Activated CD8-positive, alpha-beta T cell treated with anti-CD3 and anti-CD28 coated beads for 36 hours (primary cell): ENCODE measurements at regions of chr14 and their contacts with region 1.

Region 1: GRCh38 chr14:106605548-106606448 is 1079.4 kb downstream of the TMEM121 start:
- DNase-seq: peak; percentile 94
- ATAC-seq: peak; percentile 100
- H3K4me3 Mint-ChIP-seq: no peak overlapping the region
- H3K27ac Mint-ChIP-seq: no peak overlapping the region
- H3K4me1 Mint-ChIP-seq: no peaks in the 10 kb centered on the region
- H3K27me3 Mint-ChIP-seq: peaks cover 20% of the 10 kb centered on the region
- CTCF ChIP-seq: peak; percentile 75

Region 2: GRCh38 chr14:106051796-106052195 is 554.0 kb before region 1 on chr14:
- CTCF ChIA-PET with region 1: no interaction called
- POLR2A ChIA-PET with region 1: no interaction called
- intact Hi-C with region 1: no loop called
- DNase-seq: peak; percentile 26
- ATAC-seq: peak; percentile 71
- H3K4me3 Mint-ChIP-seq: no peak overlapping the region
- H3K27ac Mint-ChIP-seq: no peak overlapping the region
- H3K4me1 Mint-ChIP-seq: peaks cover 6% of the 10 kb centered on the region
- H3K27me3 Mint-ChIP-seq: no peaks in the 10 kb centered on the region
- CTCF ChIP-seq: no peak

Region 3: GRCh38 chr14:106268013-106268727 is 337.6 kb before region 1 on chr14:
- CTCF ChIA-PET with region 1: no interaction called
- POLR2A ChIA-PET with region 1: no interaction called
- intact Hi-C with region 1: no loop called
- DNase-seq: peak; percentile 85
- ATAC-seq: peak; percentile 66
- H3K4me3 Mint-ChIP-seq: no peak overlapping the region
- H3K27ac Mint-ChIP-seq: no peak overlapping the region
- H3K4me1 Mint-ChIP-seq: peaks cover 3% of the 10 kb centered on the region
- H3K27me3 Mint-ChIP-seq: no peaks in the 10 kb centered on the region
- CTCF ChIP-seq: no peak

Region 4: DNA sequence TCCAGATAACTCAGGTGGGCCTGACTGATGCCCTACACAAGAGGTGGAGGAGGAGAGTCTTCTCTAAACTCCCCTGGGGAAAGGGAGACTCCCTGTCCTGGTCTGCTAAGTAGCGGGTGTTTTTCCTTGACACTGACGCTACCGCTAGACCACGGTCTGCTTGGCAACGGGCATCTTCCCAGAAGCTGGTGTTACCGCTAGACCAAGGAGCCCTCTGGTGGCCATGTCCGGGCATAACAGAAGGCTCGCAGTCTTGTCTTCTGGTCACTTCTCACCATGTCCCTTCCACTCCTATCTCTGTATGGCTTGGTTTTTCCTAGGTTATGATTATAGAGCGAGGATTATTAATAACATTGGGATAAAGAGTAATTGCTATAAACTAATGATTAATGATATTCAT is 113.9 kb before region 1 on chr14:
- CTCF ChIA-PET with region 1: no interaction called
- POLR2A ChIA-PET with region 1: no interaction called
- intact Hi-C with region 1: no loop called
- DNase-seq: peak; percentile 60
- ATAC-seq: no peak
- H3K4me3 Mint-ChIP-seq: no peak overlapping the region
- H3K27ac Mint-ChIP-seq: no peak overlapping the region
- H3K4me1 Mint-ChIP-seq: peaks cover 20% of the 10 kb centered on the region
- H3K27me3 Mint-ChIP-seq: no peaks in the 10 kb centered on the region
- CTCF ChIP-seq: peak; percentile 58

Region 5: DNA sequence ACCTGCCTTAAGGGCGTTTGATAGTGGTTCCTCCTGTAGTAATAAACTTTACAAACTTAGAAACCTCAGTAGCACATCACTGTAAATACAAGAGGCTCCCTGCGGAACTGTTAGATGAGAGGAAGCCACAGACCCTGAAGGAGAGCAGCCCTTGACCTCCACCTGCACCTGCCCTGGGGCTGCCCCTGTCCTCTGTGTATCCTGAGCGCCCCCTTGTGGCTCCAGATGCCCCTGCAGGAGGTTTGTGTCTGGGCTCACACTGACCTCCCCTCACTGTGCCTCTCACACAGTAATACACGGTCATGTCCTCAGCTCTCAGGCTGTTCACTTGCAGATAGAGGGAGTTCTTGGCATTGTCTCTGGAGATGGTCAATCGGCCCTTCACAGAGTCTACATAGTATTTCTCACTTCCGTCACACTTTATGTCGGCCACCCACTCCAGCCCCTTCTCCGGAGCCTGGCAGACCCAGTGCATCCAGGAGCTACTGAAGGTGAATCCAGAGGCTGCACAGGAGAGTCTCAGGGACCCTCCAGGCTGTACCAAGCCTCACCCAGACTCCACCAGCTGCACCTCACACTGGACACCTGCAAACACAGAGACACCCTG is 19.6 kb before region 1 on chr14:
- CTCF ChIA-PET with region 1: interaction called, 24 read pairs
- POLR2A ChIA-PET with region 1: no interaction called
- intact Hi-C with region 1: no loop called
- DNase-seq: peak; percentile 85
- ATAC-seq: peak; percentile 100
- H3K4me3 Mint-ChIP-seq: no peak overlapping the region
- H3K27ac Mint-ChIP-seq: no peak overlapping the region
- H3K4me1 Mint-ChIP-seq: peaks cover 4% of the 10 kb centered on the region
- H3K27me3 Mint-ChIP-seq: no peaks in the 10 kb centered on the region
- CTCF ChIP-seq: peak; percentile 91

Region 6: DNA sequence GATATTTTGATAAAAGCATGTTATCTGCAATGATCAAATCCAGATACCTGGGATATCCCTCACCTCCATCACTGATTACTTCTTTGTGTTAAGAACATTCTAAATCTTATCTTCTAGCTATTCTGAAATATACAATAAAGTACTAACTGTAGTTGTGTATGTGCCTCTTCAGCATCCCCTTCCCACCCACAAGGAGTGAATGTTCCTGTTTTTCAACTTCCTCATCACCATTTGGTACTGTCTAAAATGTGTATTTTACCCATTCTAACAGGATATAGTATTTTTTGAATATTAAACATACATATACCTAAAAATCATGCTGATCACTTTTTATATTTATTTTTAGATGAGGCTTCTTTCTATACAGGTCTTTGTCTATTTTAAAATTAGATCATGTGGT is 173.2 kb after region 1 on chr14:
- CTCF ChIA-PET with region 1: no interaction called
- POLR2A ChIA-PET with region 1: no interaction called
- intact Hi-C with region 1: no loop called
- DNase-seq: no peak
- ATAC-seq: no peak
- H3K4me3 Mint-ChIP-seq: no peak overlapping the region
- H3K27ac Mint-ChIP-seq: no peak overlapping the region
- H3K4me1 Mint-ChIP-seq: peaks cover 17% of the 10 kb centered on the region
- H3K27me3 Mint-ChIP-seq: no peaks in the 10 kb centered on the region
- CTCF ChIP-seq: no peak